ENCODE measurements at regions of chr2 and their contacts with region 1.

Region 1: GRCh38 chr2:24075915-24076848 is at the start of gene SF3B6:
- DNase-seq: peak; percentile 98
- ATAC-seq: peak; percentile 96 to 97
- total RNA-seq, gene SF3B6: 49.4 to 56.7 TPM

Region 2: GRCh38 chr2:23939987-23940717 is 136.0 kb before region 1 on chr2 and contains the start of gene UBXN2A:
- intact Hi-C with region 1: loop called in 1 of 2 experiments (anchors 5 kb)
- DNase-seq: peak; percentile 78
- ATAC-seq: peak; percentile 96 to 97
- total RNA-seq, gene UBXN2A: 21.3 to 23.7 TPM

Region 3: DNA sequence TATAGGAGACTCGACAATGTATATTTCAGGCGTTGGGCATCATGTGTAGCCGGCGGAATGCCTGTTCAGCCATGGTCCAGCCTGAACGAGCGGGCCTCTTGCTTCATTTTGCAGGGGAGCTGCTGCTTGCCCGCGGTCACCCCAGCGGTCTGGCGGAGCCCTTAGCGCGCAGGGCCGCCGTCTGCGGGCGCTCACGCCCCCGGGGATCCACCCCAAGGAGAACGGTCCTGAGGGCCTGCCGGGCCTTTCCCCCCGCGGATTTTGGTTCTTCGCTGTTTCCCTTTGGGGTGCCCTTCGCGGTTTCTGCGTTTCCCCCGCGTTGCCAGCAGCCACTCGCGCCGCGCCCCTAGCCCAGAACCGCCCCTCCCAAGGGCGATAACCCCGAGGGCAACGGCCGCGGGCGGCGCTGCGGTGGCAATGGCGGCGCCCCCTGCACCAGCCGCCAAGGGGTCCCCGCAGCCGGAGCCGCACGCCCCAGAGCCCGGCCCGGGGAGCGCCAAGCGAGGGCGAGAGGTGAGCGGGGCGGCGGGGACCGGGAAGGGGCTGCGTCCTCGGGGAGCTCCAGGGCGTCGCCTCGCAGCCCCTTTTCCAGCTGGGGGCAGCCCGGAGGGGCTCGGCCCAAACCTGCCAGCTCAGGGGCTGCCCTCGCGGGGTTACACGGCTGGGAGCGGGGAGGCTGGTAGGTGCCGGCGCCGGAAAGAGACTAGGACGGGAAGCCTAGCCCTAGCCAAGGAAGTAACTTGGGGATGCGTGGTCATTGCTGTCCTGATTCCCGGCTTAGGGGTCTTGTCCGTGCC is 66.3 kb before region 1 on chr2 and contains the start of gene MFSD2B:
- intact Hi-C with region 1: no loop called
- DNase-seq: no peak
- ATAC-seq: peak; percentile 46 to 53
- total RNA-seq, gene MFSD2B: 0.39 to 0.41 TPM

Measured in left cardiac atrium (tissue), 4 donors.